ENCODE measurements at regions of chr17 and their contacts with region 1.

Region 1: DNA sequence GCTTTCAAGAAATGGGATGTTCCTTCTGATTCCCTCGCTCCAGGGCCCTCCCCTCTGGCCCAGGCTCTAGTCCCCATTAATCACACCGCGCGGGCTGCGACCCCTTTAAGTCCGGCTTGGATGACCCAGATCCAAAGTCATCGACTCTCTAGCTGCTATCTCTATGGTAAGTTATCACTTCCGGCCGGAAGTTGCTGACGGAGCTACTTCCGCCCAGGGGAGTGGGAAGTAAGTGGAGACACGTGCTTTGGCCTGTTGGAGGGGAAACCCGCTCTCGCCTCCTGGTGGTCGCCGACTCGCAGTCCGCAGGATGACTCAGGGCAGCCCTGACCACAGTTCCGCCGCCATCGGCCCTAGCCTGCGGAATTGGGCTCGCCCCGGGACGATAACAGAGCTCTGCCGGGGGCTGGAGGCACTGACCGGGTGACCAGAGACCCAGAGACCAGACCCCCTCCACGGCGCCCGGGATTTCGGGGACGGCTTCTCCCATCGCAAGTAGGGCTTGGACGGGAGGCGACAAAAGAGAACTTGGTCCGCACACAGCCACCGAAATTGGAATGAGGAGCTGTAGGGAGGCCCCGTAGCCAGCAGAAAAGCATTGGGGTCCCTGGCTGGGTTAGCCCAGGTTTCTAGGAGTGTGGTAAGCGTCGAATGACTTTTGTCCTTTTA is 52.2 kb upstream of the SEC14L1 start:
- DNase-seq: peak; percentile 95 to 96
- H3K4me3 ChIP-seq: peak overlapping the region; percentile 84
- H3K4me3 Mint-ChIP-seq: peak overlapping the region; percentile 89
- H3K27ac Mint-ChIP-seq: peak overlapping the region; percentile 98
- H3K4me1 ChIP-seq: peaks cover 8% of the 10 kb centered on the region
- H3K4me1 Mint-ChIP-seq: peaks cover 13% of the 10 kb centered on the region
- H3K27me3 ChIP-seq: no peaks in the 10 kb centered on the region
- H3K27me3 Mint-ChIP-seq: no peaks in the 10 kb centered on the region
- CTCF ChIP-seq: peak; percentile 84 to 89

Region 2: DNA sequence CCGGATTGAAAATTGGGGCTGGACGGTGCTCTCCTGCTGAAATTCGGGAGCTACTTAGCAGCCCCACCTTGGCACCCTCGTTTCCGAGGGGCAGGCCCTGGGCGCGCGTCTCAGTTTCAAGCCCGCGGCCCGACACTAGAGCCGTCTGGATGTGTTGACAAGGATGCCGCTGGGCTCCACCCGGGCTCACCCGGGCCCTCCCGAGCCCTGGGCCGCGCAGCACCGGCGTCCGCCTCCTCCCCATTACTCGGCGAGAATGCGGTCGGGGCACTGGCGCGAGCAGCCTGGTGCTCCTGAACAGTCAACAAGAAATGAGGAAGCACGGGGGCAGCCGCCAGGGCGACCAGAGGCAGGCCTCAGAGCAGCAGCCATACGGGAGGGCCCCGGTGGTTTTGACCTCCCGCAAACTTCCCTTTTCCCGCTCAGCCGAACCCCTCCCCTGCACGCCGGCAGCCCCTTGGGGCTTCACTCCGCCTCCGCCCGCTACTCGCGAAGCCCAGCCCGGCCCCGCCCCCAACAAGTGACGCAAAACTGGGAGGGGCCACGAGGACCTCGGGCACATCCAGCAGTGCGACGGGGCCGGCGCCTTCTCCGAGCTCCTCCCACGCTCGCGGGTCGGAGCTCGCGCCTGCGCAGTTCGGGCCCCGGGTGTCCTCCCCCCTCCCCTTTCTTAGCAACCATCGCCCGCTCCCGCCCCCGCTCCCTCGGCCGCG is 51.7 kb after region 1 on chr17:
- CTCF ChIA-PET with region 1: interaction called, 6 read pairs
- POLR2A ChIA-PET with region 1: interaction called, 14 read pairs
- intact Hi-C with region 1: loop called (anchors 2 kb)
- DNase-seq: peak; percentile 99
- H3K4me3 ChIP-seq: peak overlapping the region; percentile 77
- H3K4me3 Mint-ChIP-seq: peak overlapping the region; percentile 73
- H3K27ac Mint-ChIP-seq: peak overlapping the region; percentile 67
- H3K4me1 ChIP-seq: peaks cover 14% of the 10 kb centered on the region
- H3K4me1 Mint-ChIP-seq: peaks cover 18% of the 10 kb centered on the region
- H3K27me3 ChIP-seq: no peaks in the 10 kb centered on the region
- H3K27me3 Mint-ChIP-seq: no peaks in the 10 kb centered on the region
- CTCF ChIP-seq: no peak

Region 3: GRCh38 chr17:77164483-77165091 is 76.0 kb after region 1 on chr17:
- CTCF ChIA-PET with region 1: interaction called, 19 read pairs
- POLR2A ChIA-PET with region 1: interaction called, 5 read pairs
- intact Hi-C with region 1: no loop called
- DNase-seq: no peak
- H3K4me3 ChIP-seq: no peak overlapping the region
- H3K4me3 Mint-ChIP-seq: no peak overlapping the region
- H3K27ac Mint-ChIP-seq: no peak overlapping the region
- H3K4me1 ChIP-seq: peaks cover 22% of the 10 kb centered on the region
- H3K4me1 Mint-ChIP-seq: peaks cover 39% of the 10 kb centered on the region
- H3K27me3 ChIP-seq: no peaks in the 10 kb centered on the region
- H3K27me3 Mint-ChIP-seq: no peaks in the 10 kb centered on the region
- CTCF ChIP-seq: no peak

Region 4: DNA sequence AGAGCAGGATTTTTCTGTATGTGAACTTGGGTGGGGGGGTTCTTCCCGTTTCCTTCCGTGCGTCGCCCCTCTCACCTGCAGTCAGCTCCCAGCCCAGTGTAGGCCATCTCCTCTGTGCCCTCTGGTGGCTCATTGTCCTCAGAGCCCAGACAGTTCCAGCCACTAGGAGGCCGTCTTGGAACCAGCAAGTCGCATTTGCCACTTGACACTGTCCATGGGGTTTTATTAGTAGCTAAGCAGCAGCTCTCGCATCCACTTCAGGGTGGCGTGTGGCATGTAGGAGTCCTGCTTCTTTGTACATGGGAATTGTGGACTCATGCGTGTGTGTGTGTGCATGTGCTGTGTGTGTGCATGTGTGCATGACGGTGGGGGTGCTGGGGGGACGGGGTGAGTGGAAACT is 126.2 kb after region 1 on chr17:
- CTCF ChIA-PET with region 1: interaction called, 12 read pairs
- POLR2A ChIA-PET with region 1: no interaction called
- intact Hi-C with region 1: no loop called
- DNase-seq: peak; percentile 64 to 70
- H3K4me3 ChIP-seq: no peak overlapping the region
- H3K4me3 Mint-ChIP-seq: no peak overlapping the region
- H3K27ac Mint-ChIP-seq: no peak overlapping the region
- H3K4me1 ChIP-seq: no peaks in the 10 kb centered on the region
- H3K4me1 Mint-ChIP-seq: no peaks in the 10 kb centered on the region
- H3K27me3 ChIP-seq: no peaks in the 10 kb centered on the region
- H3K27me3 Mint-ChIP-seq: no peaks in the 10 kb centered on the region
- CTCF ChIP-seq: peak; percentile 52 to 96

Region 5: DNA sequence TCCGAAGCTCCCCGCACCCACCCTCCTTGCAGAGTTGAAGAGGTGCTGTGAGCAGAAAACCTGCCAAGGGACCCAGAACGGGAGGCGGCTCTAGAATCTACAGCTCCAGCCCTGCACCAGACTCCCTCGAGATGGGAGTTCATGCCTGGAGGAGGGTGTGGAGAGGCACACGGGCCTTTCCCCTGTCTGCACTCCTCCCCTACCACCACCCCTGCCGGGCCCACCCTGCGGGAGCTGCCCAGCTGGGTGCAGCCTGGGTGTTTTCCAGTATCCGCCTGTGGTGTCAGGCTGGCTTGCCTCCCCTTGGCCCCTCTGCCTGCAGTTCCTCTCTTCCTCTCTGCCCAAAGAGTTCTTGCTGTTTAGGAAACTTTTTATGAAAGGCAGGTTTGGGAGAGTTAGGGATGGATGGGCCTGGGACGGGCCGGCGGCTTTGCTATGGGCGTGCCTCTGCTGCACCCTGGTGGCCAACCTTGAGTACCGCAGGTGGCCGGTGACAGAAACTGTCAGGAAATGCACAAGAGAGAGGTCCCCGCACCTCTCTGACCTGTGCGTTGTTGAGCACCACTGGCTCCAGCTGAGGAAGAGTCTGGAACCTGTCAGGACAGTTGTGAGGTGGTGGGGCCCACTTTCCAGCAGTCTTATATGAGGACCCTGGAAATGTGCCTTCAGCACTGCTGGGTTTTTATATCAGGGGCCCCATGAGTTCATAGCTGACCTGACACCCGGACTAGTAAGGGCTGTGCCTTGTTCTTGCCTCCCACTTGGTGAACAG is 406.3 kb after region 1 on chr17:
- CTCF ChIA-PET with region 1: no interaction called
- POLR2A ChIA-PET with region 1: no interaction called
- intact Hi-C with region 1: loop called (anchors 1 kb)
- DNase-seq: peak; percentile 79 to 88
- H3K4me3 ChIP-seq: no peak overlapping the region
- H3K4me3 Mint-ChIP-seq: no peak overlapping the region
- H3K27ac Mint-ChIP-seq: peak overlapping the region; percentile 83
- H3K4me1 ChIP-seq: no peaks in the 10 kb centered on the region
- H3K4me1 Mint-ChIP-seq: peaks cover 7% of the 10 kb centered on the region
- H3K27me3 ChIP-seq: no peaks in the 10 kb centered on the region
- H3K27me3 Mint-ChIP-seq: no peaks in the 10 kb centered on the region
- CTCF ChIP-seq: peak; percentile 94 to 96